ENCODE measurements at regions of chr11 and their contacts with region 1.

Region 1: DNA sequence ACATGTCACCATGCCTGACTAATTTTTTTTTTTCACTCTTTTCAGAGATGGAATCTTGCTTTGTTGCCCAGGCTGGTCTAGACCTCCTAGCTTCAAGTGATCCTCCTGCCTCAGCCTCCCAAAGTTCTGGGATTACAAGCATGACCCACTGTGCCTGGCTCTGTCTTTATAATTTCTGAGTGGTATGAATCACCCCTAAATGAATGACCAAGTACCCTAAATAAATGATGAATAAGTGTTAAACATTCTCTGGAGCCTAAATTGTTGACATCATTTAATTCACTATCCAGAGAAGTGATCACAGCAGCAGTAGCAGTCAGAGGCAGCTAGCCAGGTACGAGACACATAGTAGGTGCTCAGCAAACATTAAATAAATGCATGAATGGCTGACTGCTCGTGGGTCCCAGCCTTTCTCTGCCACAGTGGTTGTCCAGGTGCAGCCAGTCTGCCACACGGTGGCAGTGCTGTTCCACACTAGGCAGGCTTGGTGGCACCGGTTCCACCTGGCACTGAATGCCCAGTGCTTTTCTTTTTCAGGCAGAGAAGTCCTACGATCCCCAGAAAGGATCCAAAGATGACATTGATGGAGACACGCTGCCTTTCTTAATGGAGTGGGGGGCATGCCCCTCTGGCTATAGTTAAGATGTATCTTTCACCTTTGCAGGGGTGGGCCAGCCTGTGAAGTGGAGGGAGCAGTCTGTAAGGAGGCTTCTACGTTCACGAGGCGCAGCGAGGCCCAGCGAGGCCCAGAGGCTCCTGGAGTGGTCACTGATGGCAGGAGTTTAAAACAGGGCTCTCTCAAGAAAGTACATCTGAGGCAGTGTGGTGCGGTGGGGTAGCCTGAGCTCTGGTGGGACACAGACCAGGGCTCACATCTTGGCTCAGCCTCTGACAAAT is 8.7 kb upstream of the TTC12 start:
- DNase-seq: peak; percentile 87
- ATAC-seq: peak; percentile 89

Region 2: GRCh38 chr11:113213549-113213948 is 92.1 kb before region 1 on chr11:
- intact Hi-C with region 1: no loop called
- DNase-seq: no peak
- ATAC-seq: no peak

Region 3: GRCh38 chr11:113528982-113529381 is 223.3 kb after region 1 on chr11:
- intact Hi-C with region 1: loop called (anchors 5 kb)
- DNase-seq: no peak
- ATAC-seq: no peak

Region 4: DNA sequence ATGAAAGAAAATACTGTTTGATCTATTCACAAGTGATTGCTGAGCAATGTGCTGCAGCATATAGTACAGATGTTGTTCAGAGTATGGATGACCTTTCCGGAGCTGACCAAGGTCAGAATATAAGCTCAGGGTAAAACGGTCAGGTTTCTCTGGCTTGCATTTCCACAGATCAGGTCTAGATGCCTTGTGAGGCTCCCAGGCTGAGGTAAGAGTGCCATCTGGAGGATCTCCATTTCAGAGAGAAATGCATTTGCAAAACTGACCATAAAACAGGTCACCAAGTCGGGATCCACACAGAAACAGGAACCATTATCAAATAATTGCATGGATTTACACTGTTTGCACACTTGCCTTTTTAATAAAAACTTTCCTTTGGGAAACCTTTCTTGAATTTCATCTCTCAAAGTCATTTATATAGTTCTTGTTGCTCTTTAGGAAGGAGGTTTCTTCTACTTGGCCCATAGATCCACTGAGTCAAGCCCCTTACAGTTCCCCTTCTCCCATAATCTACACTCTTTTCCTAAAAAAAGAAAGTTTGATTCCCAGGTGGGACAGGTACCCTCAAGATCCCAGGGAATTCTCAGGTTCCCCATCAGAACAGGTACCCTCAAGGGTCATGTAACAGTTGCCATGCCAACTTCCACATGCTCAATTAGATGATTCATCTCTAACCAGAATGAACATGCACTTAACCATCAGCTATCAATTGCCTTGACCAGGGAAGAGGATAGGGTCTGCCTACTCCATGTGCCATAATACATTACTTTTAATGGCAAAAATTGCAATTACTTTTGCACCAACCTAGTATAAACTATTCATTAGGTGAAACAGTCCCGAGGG is 425.4 kb after region 1 on chr11:
- intact Hi-C with region 1: loop called (anchors 2 kb)
- DNase-seq: no peak
- ATAC-seq: peak; percentile 68